Activated CD8-positive, alpha-beta T cell treated with anti-CD3 and anti-CD28 coated beads for 36 hours (primary cell): ENCODE measurements at regions of chr2 and their contacts with region 1.

Region 1: DNA sequence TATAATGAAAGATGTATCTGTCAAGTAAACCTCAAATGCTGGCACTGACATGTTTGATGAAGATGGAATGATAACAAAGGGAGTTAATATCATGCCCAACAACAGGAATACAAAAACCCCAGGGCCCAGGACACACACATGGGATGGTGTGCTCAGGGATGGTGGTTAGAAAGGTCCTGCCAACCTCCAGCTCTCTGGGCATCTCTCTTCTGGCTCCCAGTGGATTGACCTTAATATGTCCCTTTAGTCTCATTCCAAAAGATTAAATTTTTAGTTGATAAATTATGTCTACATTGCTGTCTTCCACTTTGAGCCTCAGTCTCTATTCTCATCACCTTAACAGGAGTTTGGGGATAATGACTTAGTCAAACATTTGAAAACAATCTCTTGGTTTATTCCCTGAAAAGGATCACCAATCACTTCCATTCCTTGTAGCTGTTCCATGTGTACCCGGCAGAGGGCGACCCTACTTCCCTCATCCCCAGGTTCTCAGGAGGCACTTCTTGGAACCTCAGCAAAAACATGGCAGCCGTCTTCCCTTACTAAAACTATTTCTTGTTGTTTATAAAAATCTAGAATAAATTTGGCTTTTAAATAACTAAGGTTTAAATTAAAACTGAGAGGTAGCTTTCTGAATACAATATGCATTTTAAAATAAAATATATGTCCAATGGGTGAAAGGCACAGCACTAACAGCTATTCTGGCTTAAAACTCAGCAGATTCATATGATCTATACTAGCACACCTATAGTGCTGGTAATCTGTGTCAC is 29.6 kb downstream of the MCEE start:
- DNase-seq: peak; percentile 64
- ATAC-seq: peak; percentile 74
- H3K4me3 Mint-ChIP-seq: no peak overlapping the region
- H3K27ac Mint-ChIP-seq: no peak overlapping the region
- H3K4me1 Mint-ChIP-seq: no peaks in the 10 kb centered on the region
- H3K27me3 Mint-ChIP-seq: peaks cover 5% of the 10 kb centered on the region
- CTCF ChIP-seq: peak; percentile 69

Region 2: DNA sequence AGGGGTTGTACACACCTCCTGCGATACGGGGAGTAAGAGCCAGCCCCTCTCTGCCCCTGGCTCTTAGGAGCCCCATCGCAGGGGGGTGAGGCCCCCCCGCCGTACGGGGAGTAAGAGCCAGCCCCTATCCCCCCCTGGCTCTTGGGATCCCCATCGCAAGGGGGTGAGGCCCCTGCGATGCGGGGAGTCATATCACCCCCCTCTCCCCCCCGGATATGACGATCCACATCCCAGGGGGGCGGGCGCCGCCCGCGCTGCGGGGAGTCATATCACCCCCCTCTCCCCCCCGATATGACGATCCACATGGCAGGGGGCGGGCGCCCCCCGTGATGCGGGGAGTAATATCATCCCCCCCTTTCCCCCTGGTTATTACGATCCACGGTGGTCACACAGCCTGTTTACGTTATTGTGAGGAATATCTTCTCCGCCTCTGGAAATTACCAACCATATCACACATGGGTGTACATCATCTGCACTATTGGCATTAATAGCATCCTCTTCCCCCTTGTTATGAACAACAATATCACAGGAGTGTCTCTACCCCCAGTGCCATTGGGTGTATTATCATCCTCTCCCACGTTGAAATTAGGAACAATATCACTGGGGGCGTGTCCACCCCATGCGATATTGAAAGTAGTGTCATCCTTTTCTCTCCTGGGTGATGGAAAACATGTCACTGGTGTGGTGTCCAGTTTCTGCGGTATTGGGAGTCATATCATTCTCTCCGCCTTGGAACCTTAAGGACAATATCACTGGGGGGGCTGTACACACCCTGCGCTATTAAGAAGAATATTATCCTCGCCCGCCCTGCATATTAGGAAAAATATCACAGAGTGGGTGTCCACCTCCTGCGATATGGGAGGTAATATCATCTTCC is 56.6 kb before region 1 on chr2:
- CTCF ChIA-PET with region 1: no interaction called
- POLR2A ChIA-PET with region 1: no interaction called
- intact Hi-C with region 1: no loop called
- DNase-seq: peak; percentile 31
- ATAC-seq: peak; percentile 69
- H3K4me3 Mint-ChIP-seq: no peak overlapping the region
- H3K27ac Mint-ChIP-seq: no peak overlapping the region
- H3K4me1 Mint-ChIP-seq: no peaks in the 10 kb centered on the region
- H3K27me3 Mint-ChIP-seq: peaks cover 6% of the 10 kb centered on the region
- CTCF ChIP-seq: no peak

Region 3: DNA sequence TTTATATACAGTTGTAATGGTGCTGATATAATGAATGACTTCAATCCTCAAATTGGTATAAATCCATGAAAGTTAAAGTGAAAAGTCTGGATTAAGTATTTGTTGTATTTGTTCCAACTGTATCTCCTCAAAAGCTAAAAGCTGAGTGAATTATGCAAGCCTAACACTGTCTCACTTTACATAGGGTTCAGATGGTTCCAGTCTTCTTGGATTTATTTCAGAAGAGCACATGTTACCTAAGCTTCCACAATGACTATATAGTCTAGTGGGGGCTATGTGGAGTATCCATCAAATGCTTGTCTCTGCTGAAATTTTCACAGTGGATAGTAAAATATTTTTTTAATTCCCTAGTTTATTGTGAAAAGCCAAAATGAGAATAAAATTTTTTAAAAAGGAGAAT is 16.7 kb after region 1 on chr2:
- CTCF ChIA-PET with region 1: interaction called, 31 read pairs
- POLR2A ChIA-PET with region 1: no interaction called
- intact Hi-C with region 1: no loop called
- DNase-seq: no peak
- ATAC-seq: no peak
- H3K4me3 Mint-ChIP-seq: no peak overlapping the region
- H3K27ac Mint-ChIP-seq: no peak overlapping the region
- H3K4me1 Mint-ChIP-seq: no peaks in the 10 kb centered on the region
- H3K27me3 Mint-ChIP-seq: no peaks in the 10 kb centered on the region
- CTCF ChIP-seq: no peak

Region 4: GRCh38 chr2:71122387-71123298 is 22.3 kb after region 1 on chr2:
- CTCF ChIA-PET with region 1: interaction called, 21 read pairs
- POLR2A ChIA-PET with region 1: no interaction called
- intact Hi-C with region 1: no loop called
- DNase-seq: no peak
- ATAC-seq: no peak
- H3K4me3 Mint-ChIP-seq: no peak overlapping the region
- H3K27ac Mint-ChIP-seq: no peak overlapping the region
- H3K4me1 Mint-ChIP-seq: peaks cover 8% of the 10 kb centered on the region
- H3K27me3 Mint-ChIP-seq: no peaks in the 10 kb centered on the region
- CTCF ChIP-seq: no peak

Region 5: GRCh38 chr2:71130113-71130904 is 29.9 kb after region 1 on chr2 and contains the starts of genes MCEE and MPHOSPH10:
- CTCF ChIA-PET with region 1: interaction called, 12 read pairs
- POLR2A ChIA-PET with region 1: interaction called, 3 read pairs
- intact Hi-C with region 1: no loop called
- DNase-seq: peak; percentile 93
- ATAC-seq: peak; percentile 94
- H3K4me3 Mint-ChIP-seq: no peak within 1 kb of the TSS
- H3K27ac Mint-ChIP-seq: no peak within 1 kb of the TSS
- H3K4me1 Mint-ChIP-seq: peaks cover 14% of the 10 kb centered on the region
- H3K27me3 Mint-ChIP-seq: no peaks in the 10 kb centered on the region
- CTCF ChIP-seq: no peak
- total RNA-seq, gene MCEE: 13.8 to 14.0 TPM
- total RNA-seq, gene MPHOSPH10: 41.7 to 47.0 TPM